ENCODE measurements at regions of chr19 and their contacts with region 1.

Region 1: GRCh38 chr19:28519952-28520861 is 692.7 kb downstream of the UQCRFS1 start:
- DNase-seq: no peak
- H3K4me3 ChIP-seq: no peak overlapping the region
- H3K27ac ChIP-seq: no peak overlapping the region
- H3K4me1 ChIP-seq: no peaks in the 10 kb centered on the region
- H3K27me3 ChIP-seq: no peaks in the 10 kb centered on the region
- CTCF ChIP-seq: no peak
- POLR2A ChIP-seq: no peak

Region 2: GRCh38 chr19:28656644-28657043 is 136.4 kb after region 1 on chr19:
- intact Hi-C with region 1: loop called (anchors 5 kb)
- DNase-seq: no peak
- H3K4me3 ChIP-seq: no peak overlapping the region
- H3K27ac ChIP-seq: no peak overlapping the region
- H3K4me1 ChIP-seq: no peaks in the 10 kb centered on the region
- H3K27me3 ChIP-seq: no peaks in the 10 kb centered on the region
- CTCF ChIP-seq: no peak
- POLR2A ChIP-seq: no peak

Measured in breast epithelium (tissue), 4 donors.